Activated T-helper 1 cell treated with anti-CD3 and anti-CD28 coated beads, Interleukin-12 subunit alpha, Interleukin-12 subunit beta, Interleukin-2, Interleukin-4 antibody, amounts not matched to agents 30 ng/mL and 10 ng/mL and 1 ng/mL, durations not matched to agents 14 hours and 24 hours and 36 hours (primary cell): ENCODE measurements at regions of chrX and their contacts with region 1.

Region 1: DNA sequence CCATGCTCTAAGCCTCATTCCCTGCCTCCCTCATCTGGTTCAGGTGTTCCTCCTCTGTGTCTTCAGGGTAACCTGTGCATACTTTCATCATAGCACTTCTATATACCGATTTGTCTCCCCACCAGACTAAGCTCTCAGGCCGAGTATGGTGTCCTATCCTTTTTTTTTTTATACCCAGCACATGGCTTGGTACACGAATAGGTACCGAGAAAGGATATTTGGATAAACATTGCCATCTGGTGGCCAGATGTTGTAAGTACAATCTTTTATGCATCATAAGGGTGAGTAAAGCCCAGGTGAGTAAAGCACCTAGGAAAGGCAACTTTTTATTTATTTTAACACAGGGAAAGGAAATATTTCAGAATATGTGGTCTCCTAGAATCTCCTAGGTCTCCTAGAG is 68.4 kb downstream of the MID2 start:
- DNase-seq: peak; percentile 5
- H3K4me3 Mint-ChIP-seq: no peak overlapping the region
- H3K27ac Mint-ChIP-seq: no peak overlapping the region
- H3K4me1 Mint-ChIP-seq: no peaks in the 10 kb centered on the region
- H3K27me3 Mint-ChIP-seq: peaks cover 2% of the 10 kb centered on the region

Region 2: GRCh38 chrX:106894392-106894909 is 999.6 kb before region 1 on chrX:
- intact Hi-C with region 1: loop called (anchors 1 kb)
- DNase-seq: peak; percentile 18
- H3K4me3 Mint-ChIP-seq: no peak overlapping the region
- H3K27ac Mint-ChIP-seq: no peak overlapping the region
- H3K4me1 Mint-ChIP-seq: no peaks in the 10 kb centered on the region
- H3K27me3 Mint-ChIP-seq: no peaks in the 10 kb centered on the region

Region 3: DNA sequence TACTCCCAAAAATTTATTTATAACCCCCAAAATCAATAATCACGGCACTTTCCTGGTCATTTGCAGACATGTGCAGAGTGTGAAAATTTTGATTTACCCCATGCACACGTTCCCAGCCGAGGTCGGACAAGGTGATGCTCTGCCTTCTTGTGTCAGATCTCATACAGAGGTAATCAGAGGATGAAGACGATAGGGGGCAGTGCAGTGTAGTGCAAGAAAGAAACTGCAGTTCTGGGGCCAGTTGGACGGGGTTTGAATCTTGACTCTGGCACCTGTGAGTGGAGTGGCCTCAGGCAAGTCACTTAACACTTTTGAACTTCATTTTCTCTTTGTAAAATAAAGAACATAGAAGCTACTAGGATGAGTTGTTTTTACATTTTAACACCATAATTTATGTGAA is 356.2 kb before region 1 on chrX:
- intact Hi-C with region 1: loop called (anchors 1 kb)
- DNase-seq: peak; percentile 6
- H3K4me3 Mint-ChIP-seq: no peak overlapping the region
- H3K27ac Mint-ChIP-seq: no peak overlapping the region
- H3K4me1 Mint-ChIP-seq: no peaks in the 10 kb centered on the region
- H3K27me3 Mint-ChIP-seq: peaks cover 8% of the 10 kb centered on the region

Region 4: DNA sequence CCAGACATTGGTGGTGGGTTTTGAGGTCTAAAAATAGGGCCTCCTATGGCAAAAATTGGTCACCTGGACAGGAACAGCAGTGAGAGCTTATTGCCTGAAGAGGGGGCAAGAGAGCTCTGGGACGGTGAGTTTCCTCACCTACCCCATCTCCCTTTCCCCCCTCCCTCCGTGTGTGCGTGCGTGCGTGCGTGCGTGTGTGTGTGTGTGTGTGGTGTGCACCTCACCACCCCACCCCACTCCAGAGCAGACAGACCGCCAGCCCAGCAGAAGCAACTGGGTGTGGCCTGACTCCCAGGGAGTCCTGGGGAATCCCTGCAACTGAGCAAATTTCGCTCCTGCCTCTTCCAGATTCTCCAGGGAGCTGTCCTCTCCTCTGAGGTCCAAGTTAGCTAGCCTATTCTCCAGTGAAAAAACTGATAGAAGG is 221.1 kb before region 1 on chrX:
- intact Hi-C with region 1: loop called (anchors 1 kb)
- DNase-seq: peak; percentile 70
- H3K4me3 Mint-ChIP-seq: peak overlapping the region; percentile 53
- H3K27ac Mint-ChIP-seq: peak overlapping the region; percentile 99
- H3K4me1 Mint-ChIP-seq: peaks cover 46% of the 10 kb centered on the region
- H3K27me3 Mint-ChIP-seq: no peaks in the 10 kb centered on the region

Region 5: DNA sequence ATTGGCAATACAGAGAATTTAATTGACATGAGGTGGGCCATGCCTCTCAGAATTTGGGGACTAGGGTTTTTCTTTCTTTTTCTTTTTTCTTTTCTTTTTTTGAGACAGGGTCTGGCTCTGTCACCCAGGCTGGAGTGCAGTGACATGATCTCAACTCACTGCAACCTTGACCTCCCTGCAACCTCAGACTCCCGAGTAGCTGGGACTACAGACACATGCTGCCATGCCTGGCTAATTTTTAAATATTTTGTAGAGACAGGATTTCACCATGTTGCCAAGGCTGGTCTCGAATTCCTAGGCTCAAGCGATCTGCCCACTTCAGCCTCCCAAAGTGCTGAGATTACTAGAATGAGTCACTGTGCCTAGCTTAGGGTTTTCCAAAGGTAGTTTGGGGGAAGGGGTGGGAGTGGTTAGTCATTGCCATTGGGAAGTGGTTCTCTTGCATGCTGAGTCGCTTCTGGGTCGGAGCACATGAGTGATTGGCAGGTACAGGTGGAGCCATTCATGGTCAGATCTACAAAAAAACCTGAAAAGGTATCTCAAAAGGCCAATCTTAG is 13.9 kb before region 1 on chrX:
- intact Hi-C with region 1: no loop called
- DNase-seq: no peak
- H3K4me3 Mint-ChIP-seq: no peak overlapping the region
- H3K27ac Mint-ChIP-seq: no peak overlapping the region
- H3K4me1 Mint-ChIP-seq: no peaks in the 10 kb centered on the region
- H3K27me3 Mint-ChIP-seq: no peaks in the 10 kb centered on the region

Region 6: GRCh38 chrX:108020631-108021030 is 126.6 kb after region 1 on chrX:
- intact Hi-C with region 1: no loop called
- DNase-seq: no peak
- H3K4me3 Mint-ChIP-seq: no peak overlapping the region
- H3K27ac Mint-ChIP-seq: peak overlapping the region; percentile 12
- H3K4me1 Mint-ChIP-seq: peaks cover 34% of the 10 kb centered on the region
- H3K27me3 Mint-ChIP-seq: no peaks in the 10 kb centered on the region

Region 7: GRCh38 chrX:108070891-108071290 is 176.9 kb after region 1 on chrX:
- intact Hi-C with region 1: loop called (anchors 1 kb)
- DNase-seq: no peak
- H3K4me3 Mint-ChIP-seq: no peak overlapping the region
- H3K27ac Mint-ChIP-seq: no peak overlapping the region
- H3K4me1 Mint-ChIP-seq: no peaks in the 10 kb centered on the region
- H3K27me3 Mint-ChIP-seq: peaks cover 6% of the 10 kb centered on the region

Region 8: DNA sequence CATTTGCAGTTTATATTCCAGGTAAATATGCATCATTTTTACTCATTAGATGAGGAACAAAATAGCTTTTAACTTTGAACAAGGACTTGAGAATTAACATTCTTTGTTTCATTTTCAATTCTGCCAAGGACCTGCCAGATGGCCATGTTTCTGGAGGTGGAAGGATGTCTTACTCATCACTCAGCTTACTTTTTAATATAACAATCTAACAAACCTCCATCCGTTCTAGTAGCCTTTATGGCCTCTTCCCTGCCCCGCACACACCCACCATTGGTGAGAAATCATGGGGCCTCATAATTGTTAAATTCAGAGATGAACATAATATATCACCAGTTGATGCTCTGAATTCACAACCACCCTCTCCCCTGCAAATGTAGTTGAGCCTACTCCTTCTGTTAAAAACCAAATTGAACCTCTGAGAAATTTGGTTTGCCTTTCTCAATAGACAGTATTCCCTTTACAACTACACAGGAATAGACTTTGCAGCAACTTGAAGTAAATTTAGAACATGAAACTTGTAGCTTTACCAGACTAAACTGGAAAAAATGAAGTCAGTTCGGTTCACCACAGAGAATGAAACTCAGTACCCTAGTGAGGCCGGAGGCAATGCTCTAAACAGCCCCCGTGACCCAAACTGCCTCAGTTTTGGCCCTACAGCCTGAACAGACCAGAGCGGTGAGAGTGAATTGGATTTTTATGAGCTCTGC is 1889.1 kb after region 1 on chrX:
- intact Hi-C with region 1: no loop called
- DNase-seq: no peak
- H3K4me3 Mint-ChIP-seq: peak overlapping the region; percentile 76
- H3K27ac Mint-ChIP-seq: peak overlapping the region; percentile 92
- H3K4me1 Mint-ChIP-seq: peaks cover 17% of the 10 kb centered on the region
- H3K27me3 Mint-ChIP-seq: no peaks in the 10 kb centered on the region